A673 (cell line): ENCODE measurements at regions of chr4 and their contacts with region 1.

Region 1: GRCh38 chr4:55948726-55949474 is at the start of gene CEP135:
- DNase-seq: peak; percentile 88
- H3K4me3 ChIP-seq: peak within 1 kb of the TSS; percentile 76
- H3K27ac ChIP-seq: peak within 1 kb of the TSS; percentile 75
- H3K4me1 ChIP-seq: peaks cover 13% of the 10 kb centered on the region
- H3K27me3 ChIP-seq: no peaks in the 10 kb centered on the region
- CTCF ChIP-seq: peak; percentile 71
- total RNA-seq, gene CEP135: 13.8 and 15.3 TPM in 2 replicates

Region 2: GRCh38 chr4:56149591-56149990 is 200.7 kb after region 1 on chr4:
- CTCF ChIA-PET with region 1: no interaction called
- POLR2A ChIA-PET with region 1: no interaction called
- intact Hi-C with region 1: no loop called
- DNase-seq: no peak
- H3K4me3 ChIP-seq: no peak overlapping the region
- H3K27ac ChIP-seq: no peak overlapping the region
- H3K4me1 ChIP-seq: no peaks in the 10 kb centered on the region
- H3K27me3 ChIP-seq: no peaks in the 10 kb centered on the region
- CTCF ChIP-seq: no peak

Region 3: DNA sequence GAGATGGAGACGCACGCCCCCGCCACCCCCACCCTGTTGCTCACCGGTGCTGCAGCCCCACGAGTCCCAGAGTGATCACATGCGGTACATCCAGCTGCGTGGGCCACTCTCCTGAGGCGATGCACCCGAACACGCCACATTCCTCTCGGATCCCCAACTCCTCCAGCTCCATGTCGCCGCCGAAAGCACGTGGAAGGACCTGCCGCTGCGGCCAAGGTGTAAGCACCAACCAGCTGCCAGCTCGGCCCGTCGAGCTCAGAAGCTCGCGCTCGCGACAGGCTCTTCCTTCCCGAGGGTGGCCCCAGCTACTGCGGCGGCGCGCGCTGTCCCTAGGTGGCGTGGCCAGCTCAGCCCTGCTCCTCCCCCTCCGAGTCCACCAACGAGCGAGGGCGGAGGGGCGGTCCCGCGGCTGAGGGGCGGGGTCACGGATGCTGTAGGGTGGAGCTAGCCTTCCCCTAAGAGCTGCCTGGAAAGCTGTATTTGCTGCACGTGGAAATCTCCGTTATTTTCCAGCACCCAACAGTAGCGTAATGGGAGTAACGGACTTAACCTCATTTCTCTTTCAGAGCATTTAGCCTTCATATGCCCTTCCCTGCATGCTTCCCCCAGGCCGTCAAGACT is 486.5 kb after region 1 on chr4 and contains the start of gene PPAT:
- CTCF ChIA-PET with region 1: no interaction called
- POLR2A ChIA-PET with region 1: no interaction called
- intact Hi-C with region 1: loop called (anchors 2 kb)
- DNase-seq: peak; percentile 94
- H3K4me3 ChIP-seq: peak within 1 kb of the TSS; percentile 82
- H3K27ac ChIP-seq: peak within 1 kb of the TSS; percentile 93
- H3K4me1 ChIP-seq: peaks cover 11% of the 10 kb centered on the region
- H3K27me3 ChIP-seq: no peaks in the 10 kb centered on the region
- CTCF ChIP-seq: no peak
- total RNA-seq, gene PPAT: 38.6 and 41.6 TPM in 2 replicates